Activated CD8-positive, alpha-beta T cell treated with anti-CD3 and anti-CD28 coated beads, Interleukin-2, amount 10 ng/mL, durations not matched to agents 7 days and 5 days (primary cell): ENCODE measurements at regions of chr1 and their contacts with region 1.

Region 1: GRCh38 chr1:26602378-26602959 is 72.9 kb downstream of the RPS6KA1 start:
- DNase-seq: peak; percentile 64
- ATAC-seq: peak; percentile 42
- H3K4me3 Mint-ChIP-seq: no peak overlapping the region
- H3K27ac Mint-ChIP-seq: no peak overlapping the region
- H3K4me1 Mint-ChIP-seq: peaks cover 23% of the 10 kb centered on the region
- H3K27me3 Mint-ChIP-seq: peaks cover 17% of the 10 kb centered on the region

Region 2: GRCh38 chr1:26500488-26501175 is 101.8 kb before region 1 on chr1:
- CTCF ChIA-PET with region 1: interaction called, 21 read pairs
- POLR2A ChIA-PET with region 1: interaction called, 4 read pairs
- DNase-seq: peak; percentile 92
- ATAC-seq: peak; percentile 77
- H3K4me3 Mint-ChIP-seq: peak overlapping the region; percentile 86
- H3K27ac Mint-ChIP-seq: peak overlapping the region; percentile 97
- H3K4me1 Mint-ChIP-seq: peaks cover 32% of the 10 kb centered on the region
- H3K27me3 Mint-ChIP-seq: no peaks in the 10 kb centered on the region

Region 3: GRCh38 chr1:26516987-26517765 is 85.3 kb before region 1 on chr1:
- CTCF ChIA-PET with region 1: no interaction called
- POLR2A ChIA-PET with region 1: no interaction called
- DNase-seq: no peak
- ATAC-seq: no peak
- H3K4me3 Mint-ChIP-seq: no peak overlapping the region
- H3K27ac Mint-ChIP-seq: no peak overlapping the region
- H3K4me1 Mint-ChIP-seq: no peaks in the 10 kb centered on the region
- H3K27me3 Mint-ChIP-seq: peaks cover 6% of the 10 kb centered on the region

Region 4: GRCh38 chr1:26553942-26554682 is 48.4 kb before region 1 on chr1:
- CTCF ChIA-PET with region 1: no interaction called
- POLR2A ChIA-PET with region 1: no interaction called
- DNase-seq: peak; percentile 42
- ATAC-seq: peak; percentile 52
- H3K4me3 Mint-ChIP-seq: no peak overlapping the region
- H3K27ac Mint-ChIP-seq: peak overlapping the region; percentile 6
- H3K4me1 Mint-ChIP-seq: peaks cover 30% of the 10 kb centered on the region
- H3K27me3 Mint-ChIP-seq: no peaks in the 10 kb centered on the region

Region 5: GRCh38 chr1:26614655-26615411 is 12.4 kb after region 1 on chr1:
- CTCF ChIA-PET with region 1: interaction called, 13 read pairs
- POLR2A ChIA-PET with region 1: no interaction called
- DNase-seq: no peak
- ATAC-seq: no peak
- H3K4me3 Mint-ChIP-seq: no peak overlapping the region
- H3K27ac Mint-ChIP-seq: no peak overlapping the region
- H3K4me1 Mint-ChIP-seq: peaks cover 17% of the 10 kb centered on the region
- H3K27me3 Mint-ChIP-seq: peaks cover 14% of the 10 kb centered on the region

Region 6: DNA sequence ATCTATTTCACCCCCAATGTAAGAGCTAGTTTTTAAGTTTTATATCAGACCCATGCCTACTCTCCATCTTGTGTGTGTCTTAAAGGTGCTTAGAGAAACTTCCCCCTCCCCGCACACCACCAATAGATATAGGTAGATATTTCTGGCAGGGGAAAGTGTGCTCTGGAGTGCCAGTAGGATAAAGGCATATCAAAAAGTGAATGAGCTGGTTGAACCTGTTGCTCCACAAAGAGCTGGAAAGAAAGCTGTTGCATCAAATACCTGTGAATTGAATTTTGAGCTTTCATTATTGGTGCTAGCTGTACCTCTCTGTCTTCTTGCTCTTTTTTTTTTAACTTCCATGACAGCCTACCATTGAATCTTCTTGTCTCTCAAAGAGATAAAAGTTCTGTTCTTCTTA is 126.2 kb after region 1 on chr1:
- CTCF ChIA-PET with region 1: interaction called, 11 read pairs
- POLR2A ChIA-PET with region 1: no interaction called
- DNase-seq: no peak
- ATAC-seq: no peak
- H3K4me3 Mint-ChIP-seq: no peak overlapping the region
- H3K27ac Mint-ChIP-seq: peak overlapping the region; percentile 35
- H3K4me1 Mint-ChIP-seq: peaks cover 72% of the 10 kb centered on the region
- H3K27me3 Mint-ChIP-seq: no peaks in the 10 kb centered on the region

Region 7: GRCh38 chr1:26811057-26811456 is 208.6 kb after region 1 on chr1:
- CTCF ChIA-PET with region 1: interaction called, 22 read pairs
- POLR2A ChIA-PET with region 1: no interaction called
- DNase-seq: no peak
- ATAC-seq: no peak
- H3K4me3 Mint-ChIP-seq: no peak overlapping the region
- H3K27ac Mint-ChIP-seq: peak overlapping the region; percentile 74
- H3K4me1 Mint-ChIP-seq: peaks cover 21% of the 10 kb centered on the region
- H3K27me3 Mint-ChIP-seq: no peaks in the 10 kb centered on the region

Region 8: DNA sequence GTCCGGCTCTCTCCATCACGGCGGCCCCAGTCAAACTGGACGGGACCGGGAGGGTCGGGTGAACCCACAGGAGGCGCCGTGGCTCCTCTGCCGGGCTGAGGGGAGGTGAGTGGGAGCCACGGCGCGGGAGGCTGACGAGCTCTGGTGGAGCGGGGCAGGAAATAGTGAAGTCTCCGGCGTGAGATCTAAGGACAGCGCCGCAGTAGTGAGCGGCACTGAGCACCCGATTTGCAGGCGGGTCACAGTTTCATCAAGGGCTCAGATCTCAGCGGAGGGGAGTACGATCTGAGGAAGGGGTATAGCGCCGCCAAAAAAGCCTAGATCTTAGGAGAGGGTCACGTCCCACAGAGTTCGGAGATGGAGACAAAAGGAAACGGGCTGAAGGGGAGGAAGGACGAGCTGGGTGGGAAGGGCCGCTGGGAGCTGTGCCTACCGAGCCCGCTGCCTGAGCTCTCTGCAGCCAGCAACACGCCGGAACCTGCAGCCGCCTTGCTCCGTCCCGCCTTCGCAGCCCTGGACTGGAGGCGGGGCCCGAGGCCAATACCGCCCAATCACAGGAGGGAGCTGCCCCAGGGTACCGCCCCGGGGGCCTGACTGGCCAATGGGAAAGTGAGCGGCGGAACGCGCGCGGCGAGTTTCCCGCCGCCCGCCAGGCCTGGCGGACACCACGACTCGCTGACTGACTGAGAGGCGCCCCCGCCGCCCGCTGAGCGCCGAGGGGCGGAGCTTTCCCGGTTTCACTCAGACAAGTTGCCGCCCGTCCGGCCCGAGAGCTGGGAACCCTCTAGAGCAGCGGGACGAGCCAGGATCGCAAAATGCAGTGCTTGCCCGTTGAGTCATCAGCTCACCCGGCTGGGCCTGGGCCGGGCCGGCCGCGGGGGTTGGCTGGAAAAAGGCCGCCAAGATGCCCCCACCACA is 262.4 kb after region 1 on chr1:
- CTCF ChIA-PET with region 1: interaction called, 15 read pairs
- POLR2A ChIA-PET with region 1: no interaction called
- DNase-seq: peak; percentile 96
- ATAC-seq: peak; percentile 97
- H3K4me3 Mint-ChIP-seq: peak overlapping the region; percentile 94
- H3K27ac Mint-ChIP-seq: peak overlapping the region; percentile 97
- H3K4me1 Mint-ChIP-seq: peaks cover 40% of the 10 kb centered on the region
- H3K27me3 Mint-ChIP-seq: no peaks in the 10 kb centered on the region